ENCODE measurements at regions of chr10 and their contacts with region 1.

Region 1: DNA sequence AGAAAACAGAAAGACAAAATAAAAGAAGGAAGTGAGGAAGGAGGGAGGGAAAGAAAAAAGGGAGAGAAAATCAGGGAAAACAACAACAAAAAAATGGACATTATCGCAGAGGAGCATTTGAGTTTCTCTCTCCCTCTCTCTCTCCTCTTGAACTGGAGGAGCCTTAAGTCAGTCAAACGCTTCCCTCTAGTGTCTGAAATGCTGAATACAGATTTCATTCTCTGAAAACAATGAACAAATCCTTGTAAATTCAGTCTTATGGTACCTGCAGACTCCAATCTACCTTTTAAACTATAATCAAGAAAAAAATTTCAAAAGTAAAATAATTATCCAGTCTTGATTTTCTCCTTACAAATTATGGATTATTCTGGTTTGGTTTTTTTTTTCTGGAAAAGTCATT is 89.2 kb upstream of the PFKP start:
- DNase-seq: peak; percentile 56
- ATAC-seq: peak; percentile 71
- H3K4me3 ChIP-seq: no peak overlapping the region
- H3K27ac ChIP-seq: no peak overlapping the region
- H3K4me1 ChIP-seq: no peaks in the 10 kb centered on the region
- H3K27me3 ChIP-seq: peaks cover 2 to 3% of the 10 kb centered on the region in 2 experiments; a peak in 3 of 5 replicates
- CTCF ChIP-seq: peak; percentile 69
- EP300 ChIP-seq: no peak
- POLR2A ChIP-seq: no peak
- RAD21 ChIP-seq: no peak

Region 2: DNA sequence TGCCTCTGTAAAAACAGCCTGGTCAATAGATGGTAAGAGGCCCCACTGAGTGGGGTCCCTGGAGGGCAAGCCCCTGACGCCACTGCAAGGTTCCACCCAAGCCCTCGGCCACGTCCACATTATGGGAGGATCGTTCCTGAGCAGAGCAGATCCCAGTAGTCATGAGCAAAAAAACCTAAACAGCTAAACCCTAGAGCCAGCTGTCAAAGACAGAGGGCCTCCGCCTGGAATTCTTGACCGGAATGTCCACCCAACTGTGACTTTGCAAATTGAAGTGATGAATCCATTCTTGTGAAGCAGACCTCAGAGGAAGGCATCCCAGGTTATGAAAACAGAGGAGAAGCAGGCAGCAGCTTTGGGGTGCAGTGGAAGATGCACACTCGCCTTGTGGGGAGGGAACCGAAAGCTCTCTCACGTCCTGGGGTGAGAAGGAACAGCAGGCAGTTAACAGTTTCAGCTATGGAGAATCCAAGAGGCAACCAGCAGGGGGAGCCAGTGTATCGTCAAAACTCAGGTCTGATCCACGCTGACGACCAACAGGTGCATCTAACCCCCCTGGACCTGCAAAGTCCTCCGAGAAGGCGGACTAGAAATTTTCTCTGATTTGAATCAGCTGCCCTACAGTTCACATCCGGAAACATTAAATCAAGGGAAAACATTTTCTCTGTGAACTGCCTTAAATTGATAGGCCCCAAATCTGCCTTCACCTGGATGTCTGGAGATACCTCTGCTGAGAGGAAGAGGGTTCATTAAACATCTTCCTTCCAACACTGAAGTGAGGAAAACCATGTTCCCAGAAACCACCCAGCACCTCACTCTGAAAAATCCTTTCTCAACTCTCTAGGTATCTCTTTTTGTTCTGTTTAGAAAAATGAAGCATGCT is 49.9 kb before region 1 on chr10:
- CTCF ChIA-PET with region 1: interaction called, 15 read pairs
- POLR2A ChIA-PET with region 1: no interaction called
- in situ Hi-C with region 1: loop called (anchors 5 kb)
- intact Hi-C with region 1: loop called (anchors 1 kb)
- DNase-seq: peak; percentile 34
- ATAC-seq: peak; percentile 93
- H3K4me3 ChIP-seq: no peak overlapping the region
- H3K27ac ChIP-seq: no peak overlapping the region
- H3K4me1 ChIP-seq: no peaks in the 10 kb centered on the region
- H3K27me3 ChIP-seq: peaks cover 0 to 40% of the 10 kb centered on the region in 2 experiments
- CTCF ChIP-seq: peak; percentile 86
- EP300 ChIP-seq: no peak
- POLR2A ChIP-seq: no peak
- RAD21 ChIP-seq: peak; percentile 70

Region 3: GRCh38 chr10:2938869-2939268 is 39.2 kb before region 1 on chr10:
- CTCF ChIA-PET with region 1: no interaction called
- POLR2A ChIA-PET with region 1: no interaction called
- in situ Hi-C with region 1: no loop called
- intact Hi-C with region 1: loop called (anchors 1 kb)
- DNase-seq: peak; percentile 5
- ATAC-seq: no peak
- H3K4me3 ChIP-seq: no peak overlapping the region
- H3K27ac ChIP-seq: no peak overlapping the region
- H3K4me1 ChIP-seq: no peaks in the 10 kb centered on the region
- H3K27me3 ChIP-seq: peaks cover 0 to 27% of the 10 kb centered on the region in 2 experiments; a peak in 2 of 5 replicates
- CTCF ChIP-seq: peak; percentile 31
- EP300 ChIP-seq: no peak
- POLR2A ChIP-seq: no peak
- RAD21 ChIP-seq: no peak

Region 4: GRCh38 chr10:2949948-2950354 is 28.2 kb before region 1 on chr10:
- CTCF ChIA-PET with region 1: no interaction called
- POLR2A ChIA-PET with region 1: no interaction called
- in situ Hi-C with region 1: no loop called
- intact Hi-C with region 1: no loop called
- DNase-seq: no peak
- ATAC-seq: no peak
- H3K4me3 ChIP-seq: no peak overlapping the region
- H3K27ac ChIP-seq: no peak overlapping the region
- H3K4me1 ChIP-seq: peaks cover 12% of the 10 kb centered on the region; the same call in 1 of the 2 replicates
- H3K27me3 ChIP-seq: no peaks in the 10 kb centered on the region; a peak in 1 of 5 replicates
- CTCF ChIP-seq: no peak
- EP300 ChIP-seq: no peak
- POLR2A ChIP-seq: no peak
- RAD21 ChIP-seq: no peak

Measured in HepG2 (cell line).